ENCODE measurements at regions of chr13 and their contacts with region 1.

Region 1: DNA sequence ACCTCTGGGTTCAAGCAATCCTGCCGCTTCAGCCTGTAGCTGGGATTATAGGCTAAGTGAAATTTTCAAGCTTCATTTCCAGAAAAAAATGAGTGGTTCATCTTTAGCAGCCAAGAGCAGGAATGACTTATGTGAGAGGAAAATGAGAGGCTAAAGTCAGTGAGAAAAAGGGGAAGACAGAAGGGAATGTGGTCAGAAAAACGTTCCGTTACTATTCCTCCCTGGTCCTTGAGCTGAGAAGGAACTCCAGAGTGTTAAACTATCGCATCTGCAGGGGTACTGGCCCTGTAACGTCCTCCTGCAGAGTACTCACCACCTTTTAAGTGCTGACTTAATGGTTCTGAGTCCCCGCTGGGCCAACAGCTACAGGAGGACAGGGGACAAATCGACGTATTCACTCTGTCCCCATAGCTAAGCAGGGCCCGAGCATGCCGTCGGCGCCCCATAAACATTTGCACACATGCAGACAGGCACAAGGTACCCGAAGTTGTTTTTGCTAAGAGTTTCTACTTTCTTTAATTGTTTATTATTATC is 88.1 kb downstream of the FLT1 start:
- DNase-seq: peak in 1 of 3 donors; percentile 41
- H3K4me3 ChIP-seq: peak overlapping the region in 2 of 7 experiments; percentile 5 to 38
- H3K27ac ChIP-seq: no peak overlapping the region
- H3K4me1 ChIP-seq: peaks cover 26 to 58% (median 45%) of the 10 kb centered on the region in 4 experiments
- H3K27me3 ChIP-seq: no peaks in the 10 kb centered on the region

Region 2: DNA sequence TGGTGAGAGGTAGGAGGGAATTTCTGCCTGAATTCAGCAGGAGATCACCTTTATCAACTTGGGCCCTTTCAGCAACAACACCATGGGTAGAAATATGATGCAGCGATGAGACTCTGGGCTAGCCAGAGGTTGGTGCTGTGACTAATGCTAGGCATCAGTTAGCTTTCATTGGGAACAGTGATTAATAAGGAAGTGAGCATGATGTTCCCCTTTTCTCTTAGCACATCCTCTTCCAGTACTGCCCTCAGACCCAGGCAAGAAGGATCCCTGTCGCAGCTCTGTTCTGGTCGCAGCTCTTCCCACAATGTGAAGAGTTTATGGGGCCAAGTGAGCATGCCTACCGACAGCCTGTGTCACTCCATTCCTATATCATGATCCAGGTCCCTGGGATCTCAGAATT is 12.4 kb before region 1 on chr13:
- CTCF ChIA-PET with region 1: interaction called, 10 read pairs
- POLR2A ChIA-PET with region 1: interaction called, 4 read pairs
- DNase-seq: peak in 2 of 3 donors; percentile 60 to 65
- H3K4me3 ChIP-seq: no peak overlapping the region
- H3K27ac ChIP-seq: no peak overlapping the region
- H3K4me1 ChIP-seq: peaks cover 0 to 6% (median 2%) of the 10 kb centered on the region in 4 experiments
- H3K27me3 ChIP-seq: no peaks in the 10 kb centered on the region